Astrocyte of the cerebellum (primary cell): ENCODE measurements at regions of chr4 and their contacts with region 1.

Region 1: DNA sequence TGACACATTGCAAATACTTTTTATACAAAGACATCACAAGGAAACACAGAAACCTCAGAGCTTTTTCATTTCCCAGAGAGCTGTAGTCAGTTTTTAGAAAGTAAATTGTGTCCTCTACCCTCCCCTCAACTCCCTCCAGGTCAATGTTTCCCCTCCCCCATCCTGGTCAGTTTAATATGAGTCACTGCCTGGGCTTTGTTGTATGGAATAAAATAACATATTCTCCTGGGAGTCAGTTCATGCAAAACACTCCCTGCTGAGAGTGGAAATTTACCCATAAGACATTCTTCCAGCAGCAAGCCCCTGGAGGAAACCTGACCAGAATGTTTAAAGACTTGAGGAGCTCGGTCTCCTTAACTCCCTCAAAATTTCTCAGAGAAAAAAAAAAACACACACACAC is 270.1 kb upstream of the LDB2 start:
- DNase-seq: peak; percentile 89
- H3K4me3 ChIP-seq: no peak overlapping the region
- CTCF ChIP-seq: no peak

Region 2: DNA sequence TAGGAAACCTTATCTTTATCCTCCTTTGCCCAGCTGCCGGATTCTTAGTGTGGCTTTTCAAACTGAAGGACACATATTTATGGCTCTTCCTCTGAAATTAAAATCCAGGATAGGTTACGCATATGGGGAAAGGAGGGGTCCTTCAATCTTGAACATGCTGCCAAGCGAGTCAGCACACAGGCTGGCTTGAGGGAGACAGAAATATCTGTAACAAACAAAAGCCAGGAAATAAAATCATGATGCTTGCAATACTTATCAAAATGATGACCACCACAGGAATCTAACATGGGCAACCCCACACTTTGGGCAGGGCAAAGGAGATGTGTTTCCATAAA is 73.7 kb before region 1 on chr4:
- in situ Hi-C with region 1: loop called (anchors 5 kb)
- DNase-seq: no peak
- H3K4me3 ChIP-seq: no peak overlapping the region
- CTCF ChIP-seq: no peak

Region 3: DNA sequence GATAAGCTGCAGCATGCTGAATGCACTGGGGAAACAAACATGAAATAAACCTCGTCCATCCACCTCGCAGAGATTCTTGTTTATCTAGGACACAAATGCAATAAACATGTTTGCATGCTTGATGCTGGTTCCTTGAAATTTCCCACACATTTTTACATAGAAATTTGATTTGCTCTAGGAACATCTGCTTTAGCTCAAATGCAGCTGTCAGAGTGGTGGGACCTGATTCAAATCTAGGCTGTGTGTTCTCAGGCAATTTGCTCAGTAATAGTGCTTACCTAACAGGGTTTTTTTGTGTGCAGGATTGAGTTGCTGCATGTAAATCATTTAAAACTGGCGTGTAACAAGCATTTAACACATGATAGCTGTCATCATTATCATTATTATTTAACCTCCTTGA is 50.2 kb after region 1 on chr4:
- in situ Hi-C with region 1: no loop called
- DNase-seq: no peak
- H3K4me3 ChIP-seq: no peak overlapping the region
- CTCF ChIP-seq: no peak

Region 4: DNA sequence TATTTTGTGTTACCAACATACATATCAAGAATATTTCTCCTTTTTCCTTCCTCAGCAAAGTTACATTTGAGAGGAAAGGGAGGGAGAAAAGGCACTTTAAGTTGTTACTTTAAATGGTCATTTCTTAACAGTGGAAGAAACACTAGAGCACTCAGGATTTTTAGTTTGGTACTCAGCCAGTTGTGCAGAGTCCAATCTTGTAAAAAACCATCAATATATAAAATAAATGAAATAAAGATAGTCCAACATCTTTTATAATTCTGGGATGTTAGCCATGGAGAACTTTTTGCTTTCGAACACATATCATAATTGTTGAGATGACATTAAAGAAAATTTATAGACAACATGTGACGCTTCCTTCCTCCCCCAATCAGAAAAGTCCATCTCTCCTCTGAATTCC is 89.5 kb after region 1 on chr4:
- in situ Hi-C with region 1: no loop called
- DNase-seq: no peak
- H3K4me3 ChIP-seq: no peak overlapping the region
- CTCF ChIP-seq: no peak